PC-3 (cell line): ENCODE measurements at regions of chr2 and their contacts with region 1.

Region 1: GRCh38 chr2:180359522-180360282 is 352.6 kb upstream of the CWC22 start:
- DNase-seq: peak; percentile 59
- ATAC-seq: peak; percentile 43
- H3K4me3 ChIP-seq: no peak overlapping the region
- H3K27ac ChIP-seq: no peak overlapping the region
- H3K4me1 ChIP-seq: peaks cover under 1% of the 10 kb centered on the region; the same call in 1 of the 2 replicates
- H3K27me3 ChIP-seq: no peaks in the 10 kb centered on the region
- CTCF ChIP-seq: peak; percentile 63

Region 2: GRCh38 chr2:180291060-180291459 is 68.6 kb before region 1 on chr2:
- CTCF ChIA-PET with region 1: no interaction called
- POLR2A ChIA-PET with region 1: no interaction called
- intact Hi-C with region 1: loop called (anchors 10 kb)
- DNase-seq: peak; percentile 89
- ATAC-seq: peak; percentile 78
- H3K4me3 ChIP-seq: peak overlapping the region; percentile 56
- H3K27ac ChIP-seq: peak overlapping the region; percentile 97
- H3K4me1 ChIP-seq: peaks cover 38% of the 10 kb centered on the region
- H3K27me3 ChIP-seq: no peaks in the 10 kb centered on the region
- CTCF ChIP-seq: no peak